Sigmoid colon (tissue), 7 donors: ENCODE measurements at regions of chr15 and their contacts with region 1.

Region 1: DNA sequence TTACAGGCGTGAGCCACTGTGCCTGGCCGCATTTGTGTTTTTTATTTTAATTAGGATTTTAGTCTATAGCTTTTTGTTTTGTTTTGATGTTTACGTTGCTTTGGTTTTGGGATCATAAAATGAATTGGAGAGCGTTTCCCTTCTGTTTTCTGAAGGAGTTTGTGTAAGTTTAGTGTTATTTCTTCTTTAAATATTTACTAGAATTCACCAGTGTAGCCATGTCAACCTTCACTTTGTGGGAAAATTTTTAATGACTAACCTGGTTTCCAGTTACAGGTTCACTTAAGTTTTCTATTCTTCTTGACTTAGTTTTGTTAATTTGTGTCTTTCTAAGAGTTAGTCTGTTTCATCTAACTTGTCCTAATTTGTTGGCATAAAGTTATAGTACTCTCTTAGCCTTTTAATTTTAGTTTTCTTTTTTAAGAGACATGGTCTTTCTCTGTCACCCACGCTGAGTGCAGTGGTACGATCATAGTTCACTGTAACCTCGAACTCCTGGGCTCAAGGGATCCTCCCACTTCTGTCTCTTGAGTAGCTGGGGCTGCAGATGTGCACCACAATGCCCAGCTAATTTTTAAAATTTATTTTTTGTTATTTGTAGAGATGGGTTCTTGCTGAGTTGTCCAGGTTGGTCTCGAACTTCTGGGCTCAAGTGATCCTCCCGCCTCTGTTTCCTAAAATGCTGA is 61.0 kb downstream of the CHD2 start:
- DNase-seq: no peak
- H3K4me3 ChIP-seq: no peak overlapping the region
- H3K27ac ChIP-seq: no peak overlapping the region
- H3K4me1 ChIP-seq: peaks cover 0 to 10% (median 0%) of the 10 kb centered on the region in 4 donors
- H3K27me3 ChIP-seq: no peaks in the 10 kb centered on the region
- CTCF ChIP-seq: no peak
- EP300 ChIP-seq: no peak
- POLR2A ChIP-seq: no peak

Region 2: GRCh38 chr15:92780843-92781242 is 180.3 kb before region 1 on chr15:
- intact Hi-C with region 1: no loop called
- DNase-seq: no peak
- H3K4me3 ChIP-seq: no peak overlapping the region
- H3K27ac ChIP-seq: no peak overlapping the region
- H3K4me1 ChIP-seq: no peaks in the 10 kb centered on the region
- H3K27me3 ChIP-seq: no peaks in the 10 kb centered on the region
- CTCF ChIP-seq: no peak
- EP300 ChIP-seq: no peak
- POLR2A ChIP-seq: no peak

Region 3: DNA sequence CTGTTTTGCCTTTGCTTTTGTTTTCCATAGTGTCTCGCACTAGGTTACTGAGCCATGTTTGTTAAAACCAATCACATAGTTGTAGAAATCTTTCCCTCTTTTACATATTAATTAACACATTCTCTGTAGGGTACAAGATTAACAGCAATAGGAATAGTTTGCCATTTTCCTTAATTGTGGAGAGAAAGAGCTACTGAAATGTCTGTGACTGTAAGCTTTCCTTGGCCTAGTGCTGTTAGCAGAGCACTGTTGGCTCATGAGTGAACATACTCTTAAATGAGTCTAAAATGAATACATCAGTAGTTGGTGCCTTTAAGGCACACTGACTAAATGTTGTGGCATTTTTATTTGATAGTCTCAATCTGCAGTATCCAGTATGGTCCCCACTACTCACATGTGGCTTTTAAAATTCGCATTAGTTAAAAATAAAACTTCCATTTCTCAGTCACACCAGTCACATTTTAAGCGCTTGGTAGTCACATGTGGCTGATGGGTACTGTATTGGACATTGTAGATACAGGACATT is 32.9 kb before region 1 on chr15:
- intact Hi-C with region 1: loop called (anchors 5 kb)
- DNase-seq: no peak
- H3K4me3 ChIP-seq: no peak overlapping the region
- H3K27ac ChIP-seq: no peak overlapping the region
- H3K4me1 ChIP-seq: peaks cover 0 to 33% (median 23%) of the 10 kb centered on the region in 4 donors
- H3K27me3 ChIP-seq: no peaks in the 10 kb centered on the region
- CTCF ChIP-seq: no peak
- EP300 ChIP-seq: no peak
- POLR2A ChIP-seq: no peak